ENCODE measurements at regions of chr3 and their contacts with region 1.

Region 1: GRCh38 chr3:5026331-5027218 is 47.3 kb downstream of the BHLHE40 start:
- DNase-seq: peak; percentile 79
- H3K4me3 ChIP-seq: peak overlapping the region; percentile 34 to 36
- H3K27ac ChIP-seq: peak overlapping the region; percentile 71 to 77
- H3K4me1 ChIP-seq: no peaks in the 10 kb centered on the region
- H3K27me3 ChIP-seq: no peaks in the 10 kb centered on the region
- CTCF ChIP-seq: peak; percentile 51 to 83 (median 82)
- POLR2A ChIP-seq: no peak

Region 2: DNA sequence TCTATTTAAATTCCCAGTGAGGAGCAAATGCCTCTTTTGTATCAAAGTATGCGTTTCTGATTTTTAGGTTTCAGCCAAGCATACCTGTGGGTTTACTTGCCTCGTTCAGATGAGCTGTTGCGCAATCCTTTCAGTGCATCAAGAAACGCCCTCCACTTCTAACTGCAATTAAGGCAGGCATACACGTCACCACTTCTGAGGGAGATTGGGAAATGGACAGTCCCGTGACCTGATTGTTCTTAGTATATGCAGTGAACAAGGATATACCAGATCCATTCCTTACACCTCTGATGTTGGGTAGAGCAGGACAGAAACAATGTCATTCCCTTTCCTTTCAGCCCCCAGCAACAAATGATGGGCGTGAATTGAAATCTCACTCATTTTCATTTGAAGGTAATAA is 314.4 kb before region 1 on chr3:
- intact Hi-C with region 1: loop called (anchors 5 kb)
- DNase-seq: peak; percentile 76
- H3K4me3 ChIP-seq: no peak overlapping the region
- H3K27ac ChIP-seq: peak overlapping the region; percentile 26 to 65
- H3K4me1 ChIP-seq: no peaks in the 10 kb centered on the region
- H3K27me3 ChIP-seq: no peaks in the 10 kb centered on the region
- CTCF ChIP-seq: no peak
- POLR2A ChIP-seq: no peak

Region 3: DNA sequence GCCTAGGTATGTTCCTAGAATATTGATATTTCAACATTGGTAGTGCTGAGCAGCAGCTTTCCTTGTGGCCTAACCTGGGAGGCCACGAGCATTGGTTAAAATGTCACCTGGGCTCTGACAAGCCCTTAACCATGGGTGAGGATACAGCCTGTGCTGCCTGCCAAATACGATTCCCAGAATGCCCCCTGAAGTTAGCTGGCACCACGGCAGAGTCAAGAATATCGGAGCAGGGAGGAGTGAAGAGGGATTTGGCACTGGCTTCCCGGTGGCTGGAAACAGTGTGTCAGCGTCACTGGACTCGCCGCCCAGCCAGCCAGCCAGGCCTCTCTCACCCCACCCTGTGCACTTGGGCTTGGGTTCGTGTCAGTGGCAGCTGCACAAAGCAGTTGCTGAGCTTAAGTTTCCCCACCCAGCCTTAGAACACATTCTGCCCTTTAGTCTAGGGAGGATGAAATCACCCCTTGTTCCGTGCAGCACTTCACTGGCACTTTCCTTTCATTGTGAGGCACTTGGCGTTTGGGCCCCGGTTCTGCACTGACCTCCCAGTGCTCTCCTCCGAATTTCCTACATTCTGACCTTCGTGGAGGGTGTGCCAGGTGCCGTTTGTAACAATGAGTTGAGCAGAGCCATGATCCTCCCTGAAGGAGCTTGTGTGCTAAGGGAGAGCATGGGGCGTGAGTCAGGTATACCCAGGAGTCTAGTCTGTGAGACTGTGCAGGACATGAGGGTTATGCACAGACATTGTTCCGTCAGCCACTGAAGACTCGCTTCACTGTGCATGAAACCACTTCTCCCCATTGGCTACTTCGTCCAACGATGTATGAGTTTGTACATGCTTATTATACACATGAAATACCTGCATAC is 200.1 kb before region 1 on chr3:
- intact Hi-C with region 1: loop called (anchors 5 kb)
- DNase-seq: peak; percentile 14
- H3K4me3 ChIP-seq: no peak overlapping the region
- H3K27ac ChIP-seq: peak overlapping the region; percentile 38 to 54
- H3K4me1 ChIP-seq: peaks cover 8% of the 10 kb centered on the region
- H3K27me3 ChIP-seq: no peaks in the 10 kb centered on the region
- CTCF ChIP-seq: no peak
- POLR2A ChIP-seq: no peak